ENCODE measurements at regions of chr2 and their contacts with region 1.

Region 1: GRCh38 chr2:38465789-38466127 is 88.7 kb upstream of the ATL2 start:
- DNase-seq: peak; percentile 35 to 36
- ATAC-seq: peak; percentile 50

Region 2: DNA sequence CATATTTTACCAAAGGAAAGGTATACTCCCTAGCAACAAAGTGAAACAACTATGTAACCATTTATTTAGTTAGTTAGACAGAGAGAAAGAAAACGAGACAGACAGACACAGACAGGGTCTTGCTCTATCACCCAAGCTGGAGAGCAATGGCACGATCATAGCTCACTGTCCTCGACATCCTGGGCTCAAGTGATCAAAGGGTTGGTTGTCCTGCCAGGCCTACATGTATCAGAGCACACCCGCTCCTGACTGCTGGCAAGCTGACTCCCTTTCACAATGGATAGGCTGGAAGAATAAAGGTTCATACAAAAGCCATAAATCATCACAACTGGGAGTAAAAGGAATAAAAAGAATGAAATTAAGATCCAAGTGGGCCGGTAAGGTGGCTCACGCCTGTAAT is 142.1 kb before region 1 on chr2:
- intact Hi-C with region 1: loop called in 1 of 2 experiments (anchors 10 kb)
- DNase-seq: no peak
- ATAC-seq: no peak

Measured in left colon (tissue), 2 donors.